ENCODE measurements at regions of chr17 and their contacts with region 1.

Region 1: GRCh38 chr17:35764123-35764991 is 3.7 kb downstream of the C17orf50 start:
- H3K4me3 ChIP-seq: peak overlapping the region; percentile 29
- H3K27ac ChIP-seq: peak overlapping the region; percentile 60; the same call in 1 of the 2 replicates
- H3K4me1 ChIP-seq: no peaks in the 10 kb centered on the region; the same call in 1 of the 2 replicates
- CTCF ChIP-seq: peak; percentile 97

Region 2: GRCh38 chr17:35679007-35679682 is 85.2 kb before region 1 on chr17:
- CTCF ChIA-PET with region 1: no interaction called
- POLR2A ChIA-PET with region 1: no interaction called
- H3K4me3 ChIP-seq: no peak overlapping the region
- H3K27ac ChIP-seq: no peak overlapping the region
- H3K4me1 ChIP-seq: no peaks in the 10 kb centered on the region
- CTCF ChIP-seq: no peak

Region 3: GRCh38 chr17:35726127-35726952 is 38.0 kb before region 1 on chr17:
- CTCF ChIA-PET with region 1: interaction called, 11 read pairs
- POLR2A ChIA-PET with region 1: interaction called, 4 read pairs
- H3K4me3 ChIP-seq: no peak overlapping the region
- H3K27ac ChIP-seq: peak overlapping the region; percentile 56
- H3K4me1 ChIP-seq: peaks cover 29% of the 10 kb centered on the region
- CTCF ChIP-seq: no peak

Region 4: GRCh38 chr17:35747540-35748017 is 16.8 kb before region 1 on chr17:
- CTCF ChIA-PET with region 1: interaction called, 53 read pairs
- POLR2A ChIA-PET with region 1: interaction called, 4 read pairs
- H3K4me3 ChIP-seq: no peak overlapping the region
- H3K27ac ChIP-seq: no peak overlapping the region
- H3K4me1 ChIP-seq: no peaks in the 10 kb centered on the region
- CTCF ChIP-seq: peak; percentile 97

Region 5: DNA sequence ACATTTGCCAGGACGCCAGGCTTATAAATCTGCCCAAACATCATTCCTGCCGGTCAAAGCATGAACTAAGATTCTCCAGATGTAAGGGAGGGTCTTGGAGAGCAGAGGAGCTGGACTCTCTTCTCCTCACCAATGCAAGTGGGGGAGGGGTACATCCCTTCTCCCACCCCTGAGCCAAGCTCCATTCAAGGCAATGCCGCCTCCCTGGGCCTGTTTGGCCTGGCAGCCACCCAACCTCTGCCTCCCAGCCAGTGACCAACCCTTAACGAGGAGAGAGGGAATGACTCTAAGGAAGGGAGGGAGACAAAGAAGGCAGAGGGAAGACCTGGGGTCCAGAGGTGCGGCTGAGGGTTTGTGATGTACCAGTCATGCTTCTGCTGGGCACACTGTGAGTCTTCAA is 10.1 kb after region 1 on chr17:
- CTCF ChIA-PET with region 1: interaction called, 56 read pairs
- POLR2A ChIA-PET with region 1: no interaction called
- H3K4me3 ChIP-seq: no peak overlapping the region
- H3K27ac ChIP-seq: no peak overlapping the region; the same call in 1 of the 2 replicates
- H3K4me1 ChIP-seq: peaks cover 10% of the 10 kb centered on the region; the same call in 1 of the 2 replicates
- CTCF ChIP-seq: no peak

Region 6: DNA sequence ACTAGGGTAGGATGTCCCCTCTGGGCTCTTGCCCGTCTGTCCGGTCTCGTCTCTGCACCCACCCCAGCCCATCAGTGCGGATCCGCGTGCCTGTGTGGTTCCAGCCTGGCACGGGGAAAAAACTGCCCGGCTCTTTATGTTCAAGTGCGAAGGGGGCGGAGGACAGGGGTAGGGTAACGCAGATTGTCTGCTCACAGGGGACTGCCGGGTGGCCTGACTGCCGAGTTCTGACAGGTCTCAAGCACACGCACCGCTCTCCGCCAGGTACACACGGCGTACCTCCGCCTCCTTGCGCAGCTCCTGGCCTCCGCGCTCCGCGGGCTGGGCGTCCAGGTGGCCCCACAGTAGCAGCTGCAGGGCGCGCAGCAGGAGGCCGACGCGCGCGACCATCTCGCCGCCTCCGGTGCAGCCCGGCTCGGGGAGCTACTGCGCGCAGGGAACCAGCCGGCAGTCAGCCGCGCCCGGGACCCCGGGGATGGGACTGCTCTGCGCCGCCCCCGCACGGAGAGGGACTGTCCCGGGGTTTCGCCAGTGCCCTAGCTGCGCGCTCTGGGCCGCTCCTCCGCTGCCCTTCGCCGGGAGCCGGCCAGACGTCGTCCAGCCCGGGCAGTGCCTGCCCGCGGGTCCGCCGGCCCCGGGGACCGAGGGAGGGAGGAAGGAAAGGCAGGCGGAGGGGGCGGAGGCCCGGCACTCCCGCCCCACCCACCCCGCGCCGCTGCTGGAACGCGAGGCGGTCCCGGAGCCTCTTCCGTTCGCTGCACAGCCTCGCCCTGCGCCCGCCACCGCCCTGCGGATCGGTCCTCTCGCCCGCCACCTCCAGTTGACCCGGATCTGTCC is 30.8 kb after region 1 on chr17 and contains the start of gene MMP28:
- CTCF ChIA-PET with region 1: interaction called, 104 read pairs
- POLR2A ChIA-PET with region 1: interaction called, 6 read pairs
- H3K4me3 ChIP-seq: peak within 1 kb of the TSS; percentile 37
- H3K27ac ChIP-seq: no peak within 1 kb of the TSS; the same call in 1 of the 2 replicates
- H3K4me1 ChIP-seq: no peaks in the 10 kb centered on the region
- CTCF ChIP-seq: no peak

Region 7: DNA sequence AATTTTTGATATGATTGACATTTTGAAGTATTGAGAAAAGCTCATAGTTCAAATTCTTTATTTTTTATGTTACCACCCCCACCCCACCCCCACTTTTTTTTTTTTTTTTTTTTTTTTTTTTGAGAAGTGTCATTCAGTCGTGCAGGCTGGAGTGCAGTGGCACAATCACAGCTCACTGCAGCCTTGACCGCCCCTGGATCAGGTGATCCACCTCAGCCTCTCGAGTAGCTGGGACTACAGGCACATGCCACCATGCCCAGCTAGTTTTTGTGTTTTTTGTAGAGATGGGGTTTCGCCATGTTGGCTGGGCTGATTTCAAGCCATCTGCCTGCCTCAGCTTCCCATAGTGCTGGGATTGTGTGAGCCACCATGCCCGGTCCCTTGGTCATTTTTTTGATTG is 52.4 kb after region 1 on chr17:
- CTCF ChIA-PET with region 1: interaction called, 118 read pairs
- POLR2A ChIA-PET with region 1: interaction called, 10 read pairs
- H3K4me3 ChIP-seq: no peak overlapping the region
- H3K27ac ChIP-seq: no peak overlapping the region
- H3K4me1 ChIP-seq: peaks cover 5% of the 10 kb centered on the region
- CTCF ChIP-seq: no peak

Region 8: DNA sequence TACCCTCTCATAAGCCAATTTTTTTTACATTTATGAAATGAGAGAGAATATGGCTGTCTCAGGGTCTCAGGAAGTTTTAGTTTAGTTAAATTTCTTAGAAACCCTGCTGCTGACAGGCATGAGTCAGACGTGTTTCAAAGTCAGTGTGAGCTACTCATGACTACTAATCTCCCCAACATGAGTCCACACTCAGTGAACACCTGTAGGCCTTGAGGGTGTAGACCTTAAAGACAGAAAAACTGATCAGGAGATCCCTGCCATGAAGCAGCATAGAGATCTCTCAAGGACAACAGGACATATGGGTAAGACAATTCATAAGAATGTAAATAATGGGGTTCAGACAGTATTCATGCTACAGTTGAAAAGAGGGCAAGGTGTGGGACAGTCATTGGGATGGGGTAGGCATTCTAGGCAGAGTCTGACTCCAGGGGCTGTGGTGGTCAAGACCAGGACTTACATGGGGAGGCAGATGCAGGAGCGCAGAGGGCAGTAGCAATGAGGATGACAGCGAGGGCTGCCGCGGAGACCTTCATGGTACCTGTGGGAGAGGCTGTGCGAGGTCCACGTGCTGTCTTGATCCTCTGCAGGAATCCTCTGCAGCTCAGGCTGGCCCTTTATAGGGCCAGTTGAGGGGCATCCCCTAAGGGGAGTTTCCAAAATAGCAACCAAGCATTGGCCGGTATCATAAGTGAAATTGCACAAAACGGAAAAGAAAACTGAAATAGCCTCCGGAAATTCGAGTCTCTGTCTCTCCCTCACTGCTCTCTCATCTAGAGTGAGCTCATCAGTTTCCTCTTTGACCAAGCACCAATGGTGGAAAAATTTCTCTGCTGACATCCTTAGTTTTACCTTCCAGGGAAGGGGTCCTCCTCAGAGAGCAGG is 115.7 kb after region 1 on chr17 and contains the start of gene CCL5:
- CTCF ChIA-PET with region 1: no interaction called
- POLR2A ChIA-PET with region 1: no interaction called
- H3K4me3 ChIP-seq: no peak within 1 kb of the TSS
- H3K27ac ChIP-seq: no peak within 1 kb of the TSS
- H3K4me1 ChIP-seq: no peaks in the 10 kb centered on the region
- CTCF ChIP-seq: no peak

Region 9: DNA sequence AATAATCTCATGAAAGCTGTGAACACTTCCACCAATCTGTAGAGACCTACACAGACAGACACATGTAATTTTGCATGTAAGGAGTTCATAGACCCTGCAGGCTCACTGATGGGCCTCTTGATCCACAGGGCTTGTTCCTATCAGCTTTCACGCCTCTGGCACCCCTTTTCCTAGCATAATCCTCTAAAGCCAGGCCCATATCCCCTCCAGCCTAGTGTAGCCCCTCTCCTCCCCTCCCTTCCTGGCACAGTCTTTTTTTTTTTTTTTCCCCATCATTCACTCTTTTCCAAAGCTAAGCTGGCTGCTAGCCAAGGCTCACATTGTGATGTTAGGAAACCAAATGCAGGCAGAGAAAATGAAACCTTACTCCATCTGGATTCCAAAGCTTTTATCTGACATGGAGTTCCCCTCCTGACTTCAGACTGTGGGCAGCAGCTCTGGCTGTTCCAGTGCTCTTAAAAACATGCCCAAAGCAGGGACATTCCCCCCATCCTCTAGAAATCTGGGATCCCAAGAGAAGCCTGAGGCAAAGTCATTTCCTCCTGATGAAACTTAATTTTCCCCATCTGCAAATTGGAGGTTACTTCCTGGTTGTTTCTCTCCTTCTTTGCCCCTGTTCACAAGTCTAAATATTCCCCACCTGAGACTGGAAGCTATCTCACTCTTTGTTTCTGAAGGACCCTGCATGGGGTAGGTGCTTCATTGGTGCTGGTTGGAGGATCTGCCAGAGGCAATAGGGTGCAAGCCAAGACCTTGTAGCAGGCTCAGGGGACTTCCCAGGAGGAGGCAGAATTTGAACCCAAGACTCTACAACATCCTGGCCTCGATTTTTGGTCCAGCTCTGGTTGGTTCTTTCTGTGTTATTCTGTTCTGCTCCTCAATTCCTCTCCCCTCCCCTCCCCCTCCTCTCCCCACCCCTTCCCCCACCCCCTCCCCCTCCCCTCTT is 125.7 kb after region 1 on chr17:
- CTCF ChIA-PET with region 1: no interaction called
- POLR2A ChIA-PET with region 1: no interaction called
- H3K4me3 ChIP-seq: no peak overlapping the region
- H3K27ac ChIP-seq: peak overlapping the region; percentile 46; the same call in 1 of the 2 replicates
- H3K4me1 ChIP-seq: peaks cover 13% of the 10 kb centered on the region
- CTCF ChIP-seq: no peak